Activated naive CD4-positive, alpha-beta T cell treated with anti-CD3 and anti-CD28 coated beads for 36 hours (primary cell): ENCODE measurements at regions of chr4 and their contacts with region 1.

Region 1: GRCh38 chr4:105146276-105147015 is at the start of gene TET2:
- DNase-seq: peak; percentile 86
- H3K4me3 Mint-ChIP-seq: peak within 1 kb of the TSS; percentile 96
- H3K27ac Mint-ChIP-seq: peak within 1 kb of the TSS; percentile 97
- H3K4me1 Mint-ChIP-seq: peaks cover 35% of the 10 kb centered on the region
- H3K27me3 Mint-ChIP-seq: no peaks in the 10 kb centered on the region
- total RNA-seq, gene TET2: 36.0 to 36.1 TPM

Region 2: DNA sequence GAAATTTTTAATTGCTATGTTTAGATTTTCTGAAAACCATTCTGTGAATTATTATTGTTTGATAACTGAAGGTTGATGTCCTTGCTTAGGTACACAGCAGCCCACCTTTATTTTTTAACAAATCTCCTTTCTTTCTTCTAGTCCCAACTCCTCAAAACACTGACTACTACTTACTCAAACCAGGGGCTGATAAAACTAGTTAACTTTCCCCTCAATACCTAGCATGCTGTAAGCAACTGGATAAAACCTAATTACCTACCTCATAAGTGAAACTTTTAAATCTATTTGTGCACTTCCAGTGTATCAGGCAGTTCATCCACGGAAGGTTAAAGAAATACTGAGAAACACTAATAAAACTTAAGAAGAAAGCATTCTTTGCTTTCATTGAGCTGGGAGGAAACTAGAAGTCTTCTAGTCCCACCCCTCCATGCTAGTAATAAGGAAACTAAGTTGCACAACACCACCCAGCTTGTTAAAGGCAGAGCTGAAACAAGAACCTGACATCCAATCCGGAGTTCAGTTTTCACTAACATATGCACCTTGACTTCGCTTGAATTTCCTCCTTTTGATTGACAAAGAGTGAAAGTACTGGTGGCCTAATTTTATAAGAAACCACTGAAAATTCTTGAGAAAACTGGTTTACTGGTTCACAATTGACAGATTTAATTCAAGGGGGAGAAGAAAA is 180.0 kb before region 1 on chr4:
- CTCF ChIA-PET with region 1: no interaction called
- intact Hi-C with region 1: loop called (anchors 1 kb)
- DNase-seq: peak; percentile 73
- H3K4me3 Mint-ChIP-seq: no peak overlapping the region
- H3K27ac Mint-ChIP-seq: peak overlapping the region; percentile 82
- H3K4me1 Mint-ChIP-seq: peaks cover 12% of the 10 kb centered on the region
- H3K27me3 Mint-ChIP-seq: peaks cover 12% of the 10 kb centered on the region

Region 3: GRCh38 chr4:105179539-105180401 is 33.3 kb after region 1 on chr4:
- CTCF ChIA-PET with region 1: no interaction called
- intact Hi-C with region 1: loop called (anchors 1 kb)
- DNase-seq: no peak
- H3K4me3 Mint-ChIP-seq: no peak overlapping the region
- H3K27ac Mint-ChIP-seq: no peak overlapping the region
- H3K4me1 Mint-ChIP-seq: peaks cover 51% of the 10 kb centered on the region
- H3K27me3 Mint-ChIP-seq: no peaks in the 10 kb centered on the region

Region 4: GRCh38 chr4:105215609-105216313 is 69.3 kb after region 1 on chr4:
- CTCF ChIA-PET with region 1: interaction called, 3 read pairs
- intact Hi-C with region 1: loop called (anchors 1 kb)
- DNase-seq: no peak
- H3K4me3 Mint-ChIP-seq: peak overlapping the region; percentile 2
- H3K27ac Mint-ChIP-seq: peak overlapping the region; percentile 85
- H3K4me1 Mint-ChIP-seq: peaks cover 46% of the 10 kb centered on the region
- H3K27me3 Mint-ChIP-seq: no peaks in the 10 kb centered on the region

Region 5: DNA sequence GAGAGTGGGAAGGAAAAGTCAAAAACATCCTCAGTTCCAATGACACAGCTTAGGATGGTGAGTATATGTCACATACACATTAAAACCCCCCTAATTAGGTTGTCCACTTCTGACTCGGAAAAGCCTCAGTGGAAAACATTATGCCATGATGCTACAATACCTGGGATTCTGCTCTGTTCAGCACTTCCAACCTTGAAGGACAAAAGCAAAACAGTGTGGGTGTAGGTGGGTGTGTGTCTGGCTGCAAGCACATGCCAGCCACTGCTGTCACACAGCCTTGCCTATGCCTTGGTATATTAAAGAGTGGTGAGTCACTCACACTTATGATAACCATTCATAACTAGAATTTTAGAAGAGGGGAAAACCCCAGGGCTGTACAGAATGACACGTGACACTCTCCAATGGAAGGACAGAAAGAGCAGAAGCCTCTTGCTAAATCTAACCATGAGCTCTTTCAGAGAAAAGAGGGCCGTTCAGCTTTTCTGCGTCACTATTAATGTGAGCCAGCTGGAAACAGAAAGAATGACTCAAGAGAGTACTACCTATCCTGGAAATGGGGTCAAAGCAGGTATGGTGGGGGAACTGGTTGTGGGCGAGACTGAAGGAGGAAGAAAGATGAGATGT is 159.8 kb after region 1 on chr4:
- CTCF ChIA-PET with region 1: no interaction called
- intact Hi-C with region 1: loop called (anchors 1 kb)
- DNase-seq: peak; percentile 84
- H3K4me3 Mint-ChIP-seq: no peak overlapping the region
- H3K27ac Mint-ChIP-seq: peak overlapping the region; percentile 87
- H3K4me1 Mint-ChIP-seq: peaks cover 24% of the 10 kb centered on the region
- H3K27me3 Mint-ChIP-seq: no peaks in the 10 kb centered on the region

Region 6: DNA sequence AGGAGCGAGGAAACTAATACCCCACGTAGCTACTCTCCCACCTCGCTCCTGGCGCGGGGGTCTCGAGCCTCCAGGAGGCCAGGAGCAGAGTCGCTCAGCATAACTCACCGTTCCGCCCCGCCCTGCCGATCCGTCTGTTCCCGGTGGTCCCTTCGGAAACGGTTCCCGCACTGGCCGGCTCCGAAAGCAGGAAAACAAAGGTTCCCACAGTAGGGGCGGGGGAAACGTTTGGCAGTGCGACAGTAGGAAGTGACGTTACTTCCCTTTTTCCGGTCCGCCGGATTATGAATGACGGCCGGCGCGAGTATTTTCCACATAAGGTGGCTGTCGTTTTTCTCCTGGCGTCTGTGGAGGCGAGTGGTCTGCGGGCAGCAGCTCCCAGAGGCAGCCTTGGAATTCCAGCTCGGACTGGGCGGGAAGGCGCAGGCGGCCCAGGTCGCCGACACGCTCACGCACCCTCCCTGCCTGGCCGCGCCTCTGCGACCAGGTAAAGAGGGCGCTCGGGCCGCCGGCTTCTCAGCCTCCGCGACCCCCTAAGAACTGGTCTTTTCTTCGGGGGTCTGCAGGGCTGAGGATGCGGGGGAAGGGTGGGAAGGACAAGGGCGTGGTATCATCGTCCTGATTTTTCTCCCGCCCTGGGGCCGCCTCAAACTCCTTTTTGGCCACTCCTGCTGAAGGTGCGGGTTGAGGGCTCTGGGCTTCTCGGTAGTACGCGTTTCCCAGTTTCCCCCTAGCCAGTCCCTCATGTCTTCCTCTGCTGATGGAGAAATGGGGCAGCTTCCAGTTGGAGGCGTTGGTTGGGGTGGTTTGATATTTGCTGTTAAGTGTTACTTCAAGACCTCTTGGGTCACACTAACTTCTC is 562.3 kb after region 1 on chr4 and contains the starts of genes GSTCD and INTS12:
- CTCF ChIA-PET with region 1: no interaction called
- intact Hi-C with region 1: loop called (anchors 1 kb)
- DNase-seq: peak; percentile 93
- H3K4me3 Mint-ChIP-seq: peak within 1 kb of the TSS; percentile 98
- H3K27ac Mint-ChIP-seq: peak within 1 kb of the TSS; percentile 91
- H3K4me1 Mint-ChIP-seq: peaks cover 26% of the 10 kb centered on the region
- H3K27me3 Mint-ChIP-seq: no peaks in the 10 kb centered on the region
- total RNA-seq, gene GSTCD: 15.8 to 18.2 TPM
- total RNA-seq, gene INTS12: 24.5 to 24.8 TPM